MCF 10A (cell line): ENCODE measurements at regions of chr21 and their contacts with region 1.

Region 1: GRCh38 chr21:39313571-39314142 is at the start of gene BRWD1:
- DNase-seq: peak; percentile 78
- H3K4me3 Mint-ChIP-seq: peak within 1 kb of the TSS; percentile 76
- H3K27ac Mint-ChIP-seq: peak within 1 kb of the TSS; percentile 94
- H3K4me1 Mint-ChIP-seq: peaks cover 20% of the 10 kb centered on the region
- H3K27me3 Mint-ChIP-seq: no peaks in the 10 kb centered on the region
- CTCF ChIP-seq: no peak
- total RNA-seq, gene BRWD1: 36.0 and 45.4 TPM in 2 replicates

Region 2: DNA sequence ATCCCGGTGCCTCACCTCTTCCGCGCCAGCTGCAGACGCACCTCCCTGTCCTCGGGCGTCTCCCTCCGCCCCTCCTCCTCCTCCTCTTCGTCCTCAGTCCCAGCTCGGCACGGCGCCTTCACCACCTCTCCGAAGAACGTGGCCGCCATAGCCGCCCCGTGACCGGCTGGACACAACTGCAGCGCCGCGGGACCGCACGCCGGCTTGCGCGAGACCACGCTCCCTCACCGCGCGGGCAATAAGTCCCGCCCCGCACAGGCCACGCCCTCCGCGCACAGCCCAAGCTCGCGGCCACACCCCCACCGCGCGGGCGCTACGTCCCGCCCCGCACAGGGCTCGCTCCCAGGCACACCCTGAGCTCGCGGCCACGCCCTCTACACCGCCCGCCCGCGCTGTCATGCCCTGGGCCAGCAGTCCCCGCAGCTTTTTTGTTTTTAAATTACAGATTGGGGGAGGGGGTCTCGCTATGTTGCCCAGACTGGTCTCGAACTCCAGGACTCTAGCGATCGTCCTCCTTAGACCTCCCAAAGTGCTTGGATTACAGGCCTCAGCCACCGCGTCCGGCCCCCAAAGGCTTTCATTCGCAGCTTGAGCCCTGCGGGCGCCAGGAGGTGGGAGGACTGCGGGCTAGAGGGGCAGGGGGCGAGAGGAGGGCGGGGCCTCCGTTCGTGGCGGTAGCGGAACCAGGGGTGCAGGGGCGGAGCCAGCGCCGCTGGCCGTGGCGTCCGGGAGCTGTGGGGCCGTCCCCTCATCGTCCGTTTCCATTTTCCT is 130.2 kb before region 1 on chr21 and contains the start of gene PSMG1:
- CTCF ChIA-PET with region 1: no interaction called
- POLR2A ChIA-PET with region 1: interaction called, 30 read pairs
- intact Hi-C with region 1: no loop called
- DNase-seq: peak; percentile 95
- H3K4me3 Mint-ChIP-seq: peak within 1 kb of the TSS; percentile 99
- H3K27ac Mint-ChIP-seq: peak within 1 kb of the TSS; percentile 95
- H3K4me1 Mint-ChIP-seq: peaks cover 33% of the 10 kb centered on the region
- H3K27me3 Mint-ChIP-seq: no peaks in the 10 kb centered on the region
- CTCF ChIP-seq: no peak
- total RNA-seq, gene PSMG1: 79.9 and 116 TPM in 2 replicates

Region 3: DNA sequence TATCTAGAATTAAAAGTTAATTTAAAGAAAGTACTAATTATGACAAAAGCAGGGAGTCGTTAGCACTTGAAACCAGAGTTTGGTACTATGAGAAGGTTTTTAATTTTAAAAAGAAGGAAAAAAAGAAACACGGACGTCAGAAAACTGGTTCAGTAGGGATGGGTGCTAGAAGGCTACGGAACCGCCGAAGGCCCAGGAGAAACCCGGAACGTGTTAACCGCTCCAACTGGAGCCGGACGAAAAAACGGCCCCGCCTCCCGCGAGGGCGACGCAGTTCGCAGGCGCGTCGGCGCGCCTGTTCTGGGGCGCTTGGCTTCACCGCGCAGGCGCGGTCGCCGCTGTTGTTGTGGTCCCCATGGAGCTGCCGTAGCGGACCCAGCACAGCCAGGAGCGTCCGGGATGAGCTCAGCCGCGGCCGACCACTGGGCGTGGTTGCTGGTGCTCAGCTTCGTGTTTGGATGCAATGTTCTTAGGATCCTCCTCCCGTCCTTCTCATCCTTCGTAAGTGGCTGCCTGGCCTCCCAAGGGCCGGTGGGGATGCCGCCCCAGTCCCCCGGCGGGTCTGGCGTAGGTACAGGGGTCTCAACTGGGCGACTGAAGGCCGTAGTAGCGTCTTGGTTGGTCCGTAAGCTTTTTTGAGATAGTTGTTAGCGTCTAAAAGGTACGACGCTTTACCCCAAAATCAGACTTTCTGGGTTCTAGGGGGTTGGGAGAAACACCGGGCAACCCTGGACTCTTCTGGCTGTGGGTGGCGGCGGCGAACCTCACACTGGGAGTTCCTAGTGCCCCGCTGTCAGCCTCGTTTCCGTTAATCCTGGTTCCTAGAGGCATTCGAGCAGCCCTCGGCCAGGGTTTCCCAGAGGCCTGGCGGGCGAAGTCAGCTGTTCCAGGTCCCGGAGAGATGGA is 66.6 kb after region 1 on chr21:
- CTCF ChIA-PET with region 1: no interaction called
- POLR2A ChIA-PET with region 1: interaction called, 26 read pairs
- intact Hi-C with region 1: no loop called
- DNase-seq: peak; percentile 92
- H3K4me3 Mint-ChIP-seq: peak overlapping the region; percentile 90
- H3K27ac Mint-ChIP-seq: peak overlapping the region; percentile 95
- H3K4me1 Mint-ChIP-seq: peaks cover 12% of the 10 kb centered on the region
- H3K27me3 Mint-ChIP-seq: no peaks in the 10 kb centered on the region
- CTCF ChIP-seq: no peak